Naive thymus-derived CD4-positive, alpha-beta T cell (primary cell): ENCODE measurements at regions of chr6 and their contacts with region 1.

Region 1: GRCh38 chr6:141906569-141907080 is 226.1 kb upstream of the GJE1 start:
- DNase-seq: no peak
- ATAC-seq: no peak
- H3K4me3 ChIP-seq: no peak overlapping the region
- H3K4me3 Mint-ChIP-seq: no peak overlapping the region
- H3K27ac ChIP-seq: no peak overlapping the region
- H3K27ac Mint-ChIP-seq: no peak overlapping the region
- H3K4me1 ChIP-seq: no peaks in the 10 kb centered on the region
- H3K4me1 Mint-ChIP-seq: peaks cover 0 to 2% (median 0%) of the 10 kb centered on the region in 7 donors
- H3K27me3 ChIP-seq: no peaks in the 10 kb centered on the region
- H3K27me3 Mint-ChIP-seq: no peaks in the 10 kb centered on the region

Region 2: DNA sequence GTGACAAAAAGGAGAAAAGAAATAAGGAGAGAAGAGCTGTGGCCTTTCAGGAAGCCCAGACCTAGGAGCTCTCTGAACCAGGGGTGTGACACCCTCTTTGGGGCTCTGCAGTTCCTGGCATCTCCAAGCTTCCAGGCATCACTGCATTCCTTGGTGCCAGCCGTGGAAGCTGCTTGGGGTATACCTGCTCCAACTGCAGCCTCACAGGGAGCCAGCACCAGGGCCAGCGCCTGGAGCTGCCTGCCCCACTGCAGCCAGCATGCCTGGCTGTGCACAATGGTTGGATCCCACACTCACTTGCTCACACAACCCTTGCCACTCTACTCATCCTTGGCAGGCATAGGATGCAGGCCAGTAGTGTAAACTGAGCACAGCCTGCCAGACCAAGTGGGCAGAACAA is 16.0 kb before region 1 on chr6:
- CTCF ChIA-PET with region 1: no interaction called
- POLR2A ChIA-PET with region 1: no interaction called
- intact Hi-C with region 1: loop called in 1 of 2 experiments (anchors 1 kb)
- DNase-seq: no peak
- ATAC-seq: no peak
- H3K4me3 ChIP-seq: no peak overlapping the region
- H3K4me3 Mint-ChIP-seq: no peak overlapping the region
- H3K27ac ChIP-seq: no peak overlapping the region
- H3K27ac Mint-ChIP-seq: no peak overlapping the region
- H3K4me1 ChIP-seq: no peaks in the 10 kb centered on the region
- H3K4me1 Mint-ChIP-seq: no peaks in the 10 kb centered on the region
- H3K27me3 ChIP-seq: no peaks in the 10 kb centered on the region
- H3K27me3 Mint-ChIP-seq: no peaks in the 10 kb centered on the region

Region 3: DNA sequence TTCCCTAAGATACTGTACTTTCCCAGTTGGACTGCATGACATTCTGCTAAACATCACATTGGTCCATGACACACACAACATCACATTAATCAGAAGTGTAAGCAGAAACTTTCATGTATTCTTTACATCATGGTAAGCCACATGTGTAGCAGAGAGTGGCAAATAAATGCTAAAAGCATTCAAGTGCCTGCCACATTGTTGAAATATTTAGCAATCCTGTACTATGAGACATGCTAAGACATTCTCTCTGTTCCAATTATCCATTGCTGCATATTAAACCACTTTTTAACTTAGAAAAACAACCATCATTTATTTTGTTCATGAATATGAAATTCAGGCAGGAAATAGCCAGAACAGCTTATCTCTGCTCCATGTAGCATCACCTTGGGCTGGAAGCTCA is 18.4 kb after region 1 on chr6:
- CTCF ChIA-PET with region 1: no interaction called
- POLR2A ChIA-PET with region 1: no interaction called
- intact Hi-C with region 1: no loop called
- DNase-seq: no peak
- ATAC-seq: no peak
- H3K4me3 ChIP-seq: no peak overlapping the region
- H3K4me3 Mint-ChIP-seq: no peak overlapping the region
- H3K27ac ChIP-seq: no peak overlapping the region
- H3K27ac Mint-ChIP-seq: no peak overlapping the region
- H3K4me1 ChIP-seq: no peaks in the 10 kb centered on the region
- H3K4me1 Mint-ChIP-seq: no peaks in the 10 kb centered on the region
- H3K27me3 ChIP-seq: no peaks in the 10 kb centered on the region
- H3K27me3 Mint-ChIP-seq: no peaks in the 10 kb centered on the region